Caco-2 (cell line): ENCODE measurements at regions of chr18 and their contacts with region 1.

Region 1: DNA sequence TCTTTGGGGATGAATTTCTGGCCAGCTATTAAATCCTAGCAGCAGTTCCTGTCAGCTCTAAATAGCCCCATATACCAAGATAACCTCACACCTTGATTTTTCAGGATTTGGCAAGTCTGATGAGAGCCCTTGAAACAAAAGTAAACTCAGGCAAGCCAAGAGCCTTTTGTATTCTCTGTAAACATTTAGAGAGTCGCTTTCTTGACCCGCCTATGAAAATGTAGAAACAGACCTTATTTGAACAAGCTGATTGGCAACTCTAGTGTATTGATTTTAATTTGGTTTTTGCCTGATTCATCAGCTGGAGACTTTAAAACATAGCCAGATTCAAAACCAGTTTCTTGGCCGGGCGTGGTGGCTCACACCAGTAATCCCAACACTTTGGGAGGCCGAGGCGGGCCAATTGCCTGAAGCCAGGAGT is 43.4 kb downstream of the CABLES1 start:
- DNase-seq: peak in 1 of 2 experiments; percentile 19
- H3K4me3 ChIP-seq: no peak overlapping the region
- H3K4me3 Mint-ChIP-seq: no peak overlapping the region
- H3K27ac Mint-ChIP-seq: peak overlapping the region; percentile 67
- H3K4me1 ChIP-seq: peaks cover 11% of the 10 kb centered on the region
- H3K4me1 Mint-ChIP-seq: peaks cover 26% of the 10 kb centered on the region
- H3K27me3 ChIP-seq: no peaks in the 10 kb centered on the region
- H3K27me3 Mint-ChIP-seq: no peaks in the 10 kb centered on the region
- CTCF ChIP-seq: no peak

Region 2: GRCh38 chr18:23137097-23137635 is 41.5 kb before region 1 on chr18:
- CTCF ChIA-PET with region 1: no interaction called
- POLR2A ChIA-PET with region 1: interaction called, 10 read pairs
- intact Hi-C with region 1: loop called (anchors 5 kb)
- DNase-seq: peak in 1 of 2 experiments; percentile 33
- H3K4me3 ChIP-seq: peak overlapping the region; percentile 94
- H3K4me3 Mint-ChIP-seq: peak overlapping the region; percentile 89
- H3K27ac Mint-ChIP-seq: peak overlapping the region; percentile 4
- H3K4me1 ChIP-seq: peaks cover 34% of the 10 kb centered on the region
- H3K4me1 Mint-ChIP-seq: peaks cover 21% of the 10 kb centered on the region
- H3K27me3 ChIP-seq: no peaks in the 10 kb centered on the region
- H3K27me3 Mint-ChIP-seq: no peaks in the 10 kb centered on the region
- CTCF ChIP-seq: no peak

Region 3: DNA sequence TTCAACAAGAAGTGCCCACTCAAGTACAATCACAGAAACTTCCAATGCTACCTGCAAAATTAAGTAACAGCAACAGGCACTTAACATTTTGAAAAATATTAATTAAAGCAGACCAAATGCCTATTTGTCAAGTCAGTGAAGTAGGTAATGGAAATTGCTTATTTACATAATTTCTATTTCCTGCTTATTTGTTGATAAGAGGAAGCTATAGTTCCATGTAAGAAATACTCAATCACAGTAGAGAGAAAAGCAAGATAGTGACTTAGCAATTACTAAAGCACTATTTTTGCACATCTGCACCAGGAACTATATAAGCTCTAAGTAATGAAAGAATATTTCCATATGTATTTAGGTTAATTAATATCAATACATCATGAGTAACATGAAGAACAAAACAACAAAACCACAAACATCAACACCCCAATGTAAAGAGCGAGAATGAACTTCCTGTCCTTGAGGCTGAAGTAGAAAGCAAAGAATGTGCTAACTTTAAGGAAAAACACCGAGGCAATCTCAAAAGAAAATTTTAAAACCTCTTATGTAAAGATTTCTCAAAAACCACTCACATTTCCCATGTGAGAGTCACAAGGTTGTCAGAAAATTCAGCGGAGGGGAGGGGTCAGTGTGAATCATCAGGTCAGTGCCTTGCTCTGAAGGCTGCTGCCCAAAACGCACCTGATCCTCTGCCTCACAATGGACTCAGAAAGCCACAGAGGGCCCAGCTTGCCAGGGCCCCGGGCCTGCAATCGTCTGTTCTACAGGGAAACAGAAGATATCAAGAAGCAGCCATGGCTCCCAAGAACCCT is 395.2 kb after region 1 on chr18:
- CTCF ChIA-PET with region 1: no interaction called
- POLR2A ChIA-PET with region 1: no interaction called
- intact Hi-C with region 1: no loop called
- DNase-seq: no peak
- H3K4me3 ChIP-seq: no peak overlapping the region
- H3K4me3 Mint-ChIP-seq: no peak overlapping the region
- H3K27ac Mint-ChIP-seq: no peak overlapping the region
- H3K4me1 ChIP-seq: peaks cover 15% of the 10 kb centered on the region
- H3K4me1 Mint-ChIP-seq: no peaks in the 10 kb centered on the region
- H3K27me3 ChIP-seq: no peaks in the 10 kb centered on the region
- H3K27me3 Mint-ChIP-seq: no peaks in the 10 kb centered on the region
- CTCF ChIP-seq: no peak